Activated B cell treated with CpG ODN at 0.5 μM for 24 hours (primary cell): ENCODE measurements at regions of chr1 and their contacts with region 1.

Region 1: DNA sequence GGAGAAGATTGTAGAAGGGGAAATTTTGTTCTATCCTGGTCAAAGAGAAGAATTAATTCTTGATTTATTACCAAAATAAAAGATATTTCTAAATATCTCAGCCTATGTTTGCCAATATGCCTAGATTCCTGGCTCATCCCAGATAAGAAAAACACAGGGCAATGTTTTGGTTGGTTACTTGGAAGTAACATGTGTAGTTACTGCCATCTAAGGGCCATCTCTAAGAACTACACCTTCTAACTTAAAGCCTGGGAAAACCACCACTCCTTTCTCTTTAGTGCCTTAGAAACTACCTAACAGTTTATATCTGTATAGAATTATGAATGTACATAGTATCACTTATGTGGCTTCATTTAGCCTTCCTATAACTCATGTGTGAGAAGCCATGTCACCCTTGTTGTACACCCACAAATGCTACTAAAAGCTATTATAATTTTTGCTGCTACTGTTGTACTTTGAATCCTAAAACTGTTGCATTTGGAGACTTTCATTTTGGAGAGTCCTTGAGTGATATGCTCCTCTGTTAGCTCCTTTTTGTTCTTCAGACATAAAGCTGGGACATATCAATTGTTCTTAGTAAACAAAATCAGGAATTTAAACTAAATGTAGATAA is 4.5 kb downstream of the AIM2 start:
- DNase-seq: no peak
- ATAC-seq: no peak
- H3K4me3 Mint-ChIP-seq: peak overlapping the region; percentile 52
- H3K27ac Mint-ChIP-seq: peak overlapping the region; percentile 98
- H3K4me1 Mint-ChIP-seq: peaks cover 78% of the 10 kb centered on the region
- H3K27me3 Mint-ChIP-seq: no peaks in the 10 kb centered on the region
- CTCF ChIP-seq: peak; percentile 51

Region 2: DNA sequence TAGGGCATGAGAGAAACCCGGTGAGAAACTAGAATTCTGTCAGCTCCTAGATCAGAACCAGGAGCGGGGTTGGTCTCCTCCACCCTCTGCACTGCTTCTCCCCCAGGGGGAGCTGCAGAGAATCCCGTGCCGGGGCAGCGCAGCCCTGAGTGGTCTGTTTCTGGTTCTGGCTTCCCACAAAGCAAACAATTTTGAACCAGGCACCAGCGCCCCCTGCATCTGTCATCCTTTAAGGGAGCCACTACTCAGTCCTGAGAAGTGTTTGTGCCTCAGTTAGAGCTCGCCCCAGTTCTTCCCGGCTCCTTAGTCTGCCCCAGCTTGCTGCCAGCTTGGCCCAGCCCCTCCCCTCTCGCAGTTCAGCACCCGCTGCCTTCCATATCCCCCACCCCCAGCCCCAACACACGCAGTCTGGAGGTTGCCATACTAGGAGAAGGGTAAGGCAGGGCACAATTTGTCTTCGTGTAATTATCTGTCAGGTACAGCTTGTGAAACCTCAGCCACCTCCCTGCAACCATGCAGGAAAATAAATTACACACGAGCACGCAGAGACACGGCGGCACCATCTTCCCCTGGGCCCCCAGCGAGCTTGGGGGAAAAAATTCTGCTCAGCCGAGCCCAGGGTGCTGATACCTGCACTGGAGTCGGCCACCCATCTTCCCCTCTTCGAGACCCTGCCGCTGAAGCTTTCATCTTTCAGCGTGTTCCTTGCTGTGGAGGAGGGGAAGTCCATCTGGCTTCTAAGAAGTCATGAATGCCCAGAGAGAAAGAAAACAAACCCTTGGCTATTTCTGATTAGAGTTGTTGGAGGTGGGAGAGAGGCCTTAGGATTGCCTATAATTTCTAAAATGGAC is 954.0 kb before region 1 on chr1:
- CTCF ChIA-PET with region 1: no interaction called
- POLR2A ChIA-PET with region 1: no interaction called
- intact Hi-C with region 1: loop called (anchors 5 kb)
- DNase-seq: peak; percentile 45
- ATAC-seq: peak; percentile 60
- H3K4me3 Mint-ChIP-seq: peak overlapping the region; percentile 64
- H3K27ac Mint-ChIP-seq: no peak overlapping the region
- H3K4me1 Mint-ChIP-seq: peaks cover 27% of the 10 kb centered on the region
- H3K27me3 Mint-ChIP-seq: peaks cover 20% of the 10 kb centered on the region
- CTCF ChIP-seq: no peak

Region 3: GRCh38 chr1:158248118-158248517 is 824.0 kb before region 1 on chr1:
- CTCF ChIA-PET with region 1: interaction called, 11 read pairs
- POLR2A ChIA-PET with region 1: no interaction called
- intact Hi-C with region 1: loop called (anchors 1 kb)
- DNase-seq: peak; percentile 32
- ATAC-seq: peak; percentile 83
- H3K4me3 Mint-ChIP-seq: peak overlapping the region; percentile 26
- H3K27ac Mint-ChIP-seq: peak overlapping the region; percentile 59
- H3K4me1 Mint-ChIP-seq: peaks cover 51% of the 10 kb centered on the region
- H3K27me3 Mint-ChIP-seq: no peaks in the 10 kb centered on the region
- CTCF ChIP-seq: no peak

Region 4: GRCh38 chr1:158398818-158399514 is 673.1 kb before region 1 on chr1 and contains the start of gene OR10T2:
- CTCF ChIA-PET with region 1: no interaction called
- POLR2A ChIA-PET with region 1: no interaction called
- intact Hi-C with region 1: loop called (anchors 1 kb)
- DNase-seq: no peak
- ATAC-seq: no peak
- H3K4me3 Mint-ChIP-seq: no peak within 1 kb of the TSS
- H3K27ac Mint-ChIP-seq: no peak within 1 kb of the TSS
- H3K4me1 Mint-ChIP-seq: peaks cover 12% of the 10 kb centered on the region
- H3K27me3 Mint-ChIP-seq: no peaks in the 10 kb centered on the region
- CTCF ChIP-seq: no peak
- total RNA-seq, gene OR10T2: not detected in 2 replicates

Region 5: DNA sequence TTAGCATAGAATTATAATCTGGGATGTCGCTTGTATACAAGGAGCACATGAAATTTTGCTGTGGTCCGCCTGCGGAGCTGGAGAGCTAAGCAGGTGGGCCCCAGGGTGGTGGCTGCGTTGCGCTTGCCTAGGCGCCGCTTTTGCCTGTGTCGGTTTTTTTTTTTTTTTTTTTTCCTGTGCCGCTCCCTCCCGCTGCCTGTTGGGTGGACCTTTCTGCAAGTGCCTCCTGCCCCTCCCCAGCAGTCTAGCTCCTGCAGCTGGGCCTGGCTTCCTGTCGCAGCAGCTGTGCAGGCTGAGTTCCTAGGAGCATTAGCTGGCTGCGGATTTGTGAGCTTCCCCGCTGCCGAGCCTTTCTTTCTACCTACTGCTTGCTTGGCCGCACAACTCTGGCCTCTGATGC is 120.1 kb before region 1 on chr1:
- CTCF ChIA-PET with region 1: no interaction called
- POLR2A ChIA-PET with region 1: interaction called, 11 read pairs
- intact Hi-C with region 1: loop called (anchors 5 kb)
- DNase-seq: peak; percentile 19
- ATAC-seq: peak; percentile 76
- H3K4me3 Mint-ChIP-seq: peak overlapping the region; percentile 68
- H3K27ac Mint-ChIP-seq: peak overlapping the region; percentile 88
- H3K4me1 Mint-ChIP-seq: peaks cover 25% of the 10 kb centered on the region
- H3K27me3 Mint-ChIP-seq: no peaks in the 10 kb centered on the region
- CTCF ChIP-seq: no peak

Region 6: DNA sequence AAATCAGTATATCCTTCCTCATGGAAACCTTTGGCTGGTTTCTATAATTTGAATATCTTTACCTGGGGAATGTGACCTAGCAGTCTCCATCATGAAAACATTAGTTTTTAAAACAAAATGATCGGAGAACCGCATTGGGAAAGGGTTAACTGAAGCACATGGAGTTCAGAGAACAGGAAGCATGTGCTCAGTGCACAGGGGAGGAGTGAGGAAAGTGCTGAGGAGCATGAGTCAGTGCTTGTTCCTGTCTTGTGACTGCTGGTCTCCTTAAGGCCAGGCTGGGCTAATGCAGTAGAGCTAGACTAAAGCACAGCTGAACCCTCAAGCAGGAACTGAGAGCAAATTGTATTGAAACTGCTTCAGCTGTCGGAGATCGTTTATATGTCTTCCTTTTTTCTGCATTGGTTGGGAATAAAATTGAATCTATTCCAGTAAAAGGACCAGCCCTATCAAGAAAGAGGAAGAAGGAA is 56.6 kb before region 1 on chr1:
- CTCF ChIA-PET with region 1: interaction called, 3 read pairs
- POLR2A ChIA-PET with region 1: interaction called, 75 read pairs
- intact Hi-C with region 1: loop called (anchors 1 kb)
- DNase-seq: peak; percentile 36
- ATAC-seq: peak; percentile 98
- H3K4me3 Mint-ChIP-seq: peak overlapping the region; percentile 83
- H3K27ac Mint-ChIP-seq: peak overlapping the region; percentile 92
- H3K4me1 Mint-ChIP-seq: peaks cover 70% of the 10 kb centered on the region
- H3K27me3 Mint-ChIP-seq: no peaks in the 10 kb centered on the region
- CTCF ChIP-seq: no peak

Region 7: DNA sequence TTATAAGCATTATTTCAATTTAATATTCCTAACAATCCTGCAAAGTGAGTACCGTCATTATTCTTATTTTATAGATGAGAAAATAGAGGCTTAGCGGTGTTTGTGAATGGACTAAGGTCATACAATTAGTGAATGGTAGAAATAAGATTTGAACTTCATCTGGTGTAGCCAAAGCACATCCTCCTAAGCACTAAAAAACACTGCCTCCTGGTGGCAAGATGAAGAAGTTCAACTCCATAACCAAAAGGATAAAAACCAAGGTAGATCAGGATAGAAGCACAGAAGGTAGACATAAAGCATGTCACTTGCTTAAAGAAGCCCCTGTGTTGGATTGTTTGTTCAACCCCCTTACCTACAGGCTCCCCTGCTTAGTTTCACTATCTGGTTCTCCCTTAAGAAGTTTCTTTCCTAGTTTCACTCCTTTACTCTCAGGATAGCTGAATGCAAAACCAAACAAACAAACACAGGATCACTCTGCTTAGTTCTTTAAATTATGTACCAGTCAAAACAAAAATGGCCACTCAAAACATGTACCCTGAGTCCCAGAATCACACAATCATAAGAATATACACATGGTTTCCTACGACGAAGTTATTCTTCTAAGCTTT is 17.2 kb after region 1 on chr1:
- CTCF ChIA-PET with region 1: interaction called, 17 read pairs
- POLR2A ChIA-PET with region 1: interaction called, 38 read pairs
- intact Hi-C with region 1: loop called (anchors 1 kb)
- DNase-seq: no peak
- ATAC-seq: peak; percentile 33
- H3K4me3 Mint-ChIP-seq: no peak overlapping the region
- H3K27ac Mint-ChIP-seq: peak overlapping the region; percentile 44
- H3K4me1 Mint-ChIP-seq: peaks cover 23% of the 10 kb centered on the region
- H3K27me3 Mint-ChIP-seq: no peaks in the 10 kb centered on the region
- CTCF ChIP-seq: no peak

Region 8: GRCh38 chr1:159646687-159647086 is 574.6 kb after region 1 on chr1:
- CTCF ChIA-PET with region 1: no interaction called
- POLR2A ChIA-PET with region 1: no interaction called
- intact Hi-C with region 1: no loop called
- DNase-seq: no peak
- ATAC-seq: no peak
- H3K4me3 Mint-ChIP-seq: no peak overlapping the region
- H3K27ac Mint-ChIP-seq: no peak overlapping the region
- H3K4me1 Mint-ChIP-seq: no peaks in the 10 kb centered on the region
- H3K27me3 Mint-ChIP-seq: peaks cover 17% of the 10 kb centered on the region
- CTCF ChIP-seq: no peak